ENCODE measurements at regions of chr4 and their contacts with region 1.

Region 1: DNA sequence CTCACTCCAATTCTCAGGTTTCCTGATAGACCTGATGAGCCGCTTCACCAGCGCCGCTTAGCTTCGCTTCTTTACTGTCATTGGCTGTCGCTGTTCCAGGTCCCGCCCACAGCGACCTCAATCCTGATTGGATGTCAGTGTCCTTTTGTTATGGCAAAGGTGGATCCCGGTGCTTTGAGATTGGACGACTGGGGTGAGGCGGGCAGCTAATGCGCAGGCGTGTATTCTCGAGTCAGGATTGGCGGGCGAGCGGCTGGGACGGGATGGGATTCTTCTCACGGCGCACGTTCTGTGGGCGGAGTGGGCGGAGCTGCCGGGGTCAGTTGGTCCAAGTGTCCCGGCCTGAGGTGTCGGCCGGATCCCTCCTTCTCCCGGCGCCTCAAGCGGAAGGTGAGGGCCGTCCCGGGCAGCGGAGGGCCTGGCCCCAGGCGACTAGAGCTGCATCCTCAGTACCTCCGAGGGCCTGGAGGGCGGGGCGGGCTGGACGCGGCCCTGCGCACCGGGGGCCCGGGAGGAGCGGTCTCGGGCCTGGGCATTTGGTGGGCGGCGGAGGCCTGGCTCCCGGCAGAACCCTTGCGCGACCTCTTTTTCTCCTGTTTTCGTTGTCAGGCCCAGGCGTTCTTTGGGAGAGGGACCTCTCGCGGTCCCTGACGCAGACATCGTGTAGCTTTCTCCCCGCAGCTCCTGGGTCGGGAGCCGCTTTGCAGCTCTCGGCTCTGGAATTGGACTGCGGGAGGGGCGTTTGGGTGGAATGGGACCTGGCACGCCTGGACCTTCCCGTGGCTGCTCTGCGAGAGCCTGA is at the start of gene SCOC:
- DNase-seq: peak; percentile 98 to 99
- ATAC-seq: peak; percentile 98 to 99 (median 99)
- H3K4me3 ChIP-seq: peak within 1 kb of the TSS; percentile 94
- H3K27ac ChIP-seq: peak within 1 kb of the TSS; percentile 94
- H3K4me1 ChIP-seq: peaks cover 28% of the 10 kb centered on the region
- H3K27me3 ChIP-seq: no peaks in the 10 kb centered on the region
- CTCF ChIP-seq: no peak
- total RNA-seq, gene SCOC: 23.9 to 31.6 (median 28.5) TPM

Region 2: DNA sequence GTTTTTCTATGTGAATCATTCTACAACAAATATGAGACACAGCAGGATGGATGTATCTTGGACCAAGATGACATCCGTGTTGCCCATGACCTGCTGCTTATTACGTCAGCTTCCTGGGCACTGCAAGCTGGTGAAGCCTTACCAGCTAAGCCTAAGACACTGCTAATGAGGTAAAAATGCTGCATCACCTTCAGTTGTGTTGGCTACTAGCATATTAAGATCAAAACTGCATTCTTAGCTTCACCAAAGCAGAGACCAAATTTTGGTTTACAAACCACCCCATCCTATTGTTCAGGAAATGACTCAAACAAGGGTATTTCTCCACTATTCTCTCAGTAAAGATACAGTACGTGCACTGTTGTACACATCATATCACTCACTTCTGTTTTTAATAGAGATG is 269.9 kb before region 1 on chr4:
- intact Hi-C with region 1: no loop called
- DNase-seq: no peak
- ATAC-seq: no peak
- H3K4me3 ChIP-seq: no peak overlapping the region
- H3K27ac ChIP-seq: no peak overlapping the region
- H3K4me1 ChIP-seq: peaks cover 6% of the 10 kb centered on the region
- H3K27me3 ChIP-seq: no peaks in the 10 kb centered on the region
- CTCF ChIP-seq: no peak

Region 3: DNA sequence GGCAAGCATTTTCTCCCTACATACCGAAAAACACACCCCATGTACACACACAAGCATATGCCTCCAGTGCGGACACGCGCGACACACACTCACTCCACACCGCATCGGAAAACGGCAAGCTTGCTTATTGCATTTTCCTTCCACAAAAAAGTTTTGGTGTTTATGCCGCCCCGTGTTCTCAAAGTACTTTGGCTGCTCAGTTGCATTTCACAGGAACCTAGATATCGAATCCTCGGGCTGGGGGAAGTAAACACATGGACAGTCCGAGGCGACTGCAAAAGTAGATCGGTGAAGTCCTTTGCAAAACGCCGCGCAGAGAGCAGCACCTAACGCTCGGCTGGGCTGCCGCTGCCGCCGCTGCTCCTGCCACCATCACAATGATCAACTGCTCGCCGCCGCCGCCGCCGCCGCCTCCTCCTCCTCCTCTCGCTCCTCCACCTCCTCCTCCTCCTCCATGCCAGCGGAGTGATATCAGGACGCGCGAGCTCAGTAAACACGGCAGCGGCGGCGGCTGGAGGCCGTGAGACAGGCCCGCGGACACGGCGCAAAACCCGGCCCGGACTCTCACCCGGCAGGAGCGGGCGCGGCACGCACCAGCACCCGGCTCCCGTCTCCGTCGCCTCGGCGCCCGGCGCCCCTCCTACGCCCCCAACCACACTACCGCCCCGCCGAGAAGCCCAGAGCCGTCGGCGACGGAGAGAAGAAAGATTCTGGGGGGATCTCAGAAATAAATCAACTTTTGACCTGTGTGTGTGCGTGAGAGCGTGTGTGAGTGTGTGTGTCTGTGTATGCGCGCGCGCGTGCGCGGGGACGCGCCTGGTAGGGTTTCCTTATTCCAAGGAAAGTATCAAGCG is 219.6 kb before region 1 on chr4 and contains the start of gene MAML3:
- intact Hi-C with region 1: no loop called
- DNase-seq: peak; percentile 96 to 97
- ATAC-seq: peak; percentile 74 to 88 (median 80)
- H3K4me3 ChIP-seq: peak within 1 kb of the TSS; percentile 80
- H3K27ac ChIP-seq: peak within 1 kb of the TSS; percentile 97
- H3K4me1 ChIP-seq: peaks cover 8% of the 10 kb centered on the region
- H3K27me3 ChIP-seq: no peaks in the 10 kb centered on the region
- CTCF ChIP-seq: no peak
- total RNA-seq, gene MAML3: 0.74 to 2.7 (median 1.4) TPM

Region 4: GRCh38 chr4:140286456-140286855 is 87.1 kb before region 1 on chr4:
- intact Hi-C with region 1: no loop called
- DNase-seq: peak in 1 of 2 donors; percentile 36
- ATAC-seq: peak; percentile 39 to 85 (median 80)
- H3K4me3 ChIP-seq: peak overlapping the region; percentile 29
- H3K27ac ChIP-seq: no peak overlapping the region
- H3K4me1 ChIP-seq: no peaks in the 10 kb centered on the region
- H3K27me3 ChIP-seq: no peaks in the 10 kb centered on the region
- CTCF ChIP-seq: no peak

Region 5: GRCh38 chr4:140523857-140524742 is 150.6 kb after region 1 on chr4 and contains the start of gene ELMOD2:
- intact Hi-C with region 1: loop called (anchors 5 to 10 kb)
- DNase-seq: peak; percentile 99 to 100
- ATAC-seq: peak; percentile 100
- H3K4me3 ChIP-seq: peak within 1 kb of the TSS; percentile 100
- H3K27ac ChIP-seq: peak within 1 kb of the TSS; percentile 92
- H3K4me1 ChIP-seq: peaks cover 9% of the 10 kb centered on the region
- H3K27me3 ChIP-seq: no peaks in the 10 kb centered on the region
- CTCF ChIP-seq: peak; percentile 90
- total RNA-seq, gene ELMOD2: 6.9 to 10.0 (median 8.7) TPM

Region 6: GRCh38 chr4:141133146-141133998 is 759.8 kb after region 1 on chr4 and contains the start of gene RNF150:
- intact Hi-C with region 1: loop called in 1 of 2 experiments (anchors 10 kb)
- DNase-seq: peak; percentile 69 to 85
- ATAC-seq: peak; percentile 81 to 88 (median 85)
- H3K4me3 ChIP-seq: peak within 1 kb of the TSS; percentile 93
- H3K27ac ChIP-seq: peak within 1 kb of the TSS; percentile 76
- H3K4me1 ChIP-seq: peaks cover 23% of the 10 kb centered on the region
- H3K27me3 ChIP-seq: no peaks in the 10 kb centered on the region
- CTCF ChIP-seq: peak; percentile 75
- total RNA-seq, gene RNF150: 3.2 to 12.6 (median 3.8) TPM